ENCODE measurements at regions of chr5 and their contacts with region 1.

Region 1: GRCh38 chr5:31825518-31826068 is 186.7 kb downstream of the PDZD2 start:
- DNase-seq: peak; percentile 59
- H3K4me3 Mint-ChIP-seq: no peak overlapping the region
- H3K27ac Mint-ChIP-seq: no peak overlapping the region
- H3K4me1 Mint-ChIP-seq: no peaks in the 10 kb centered on the region
- H3K27me3 Mint-ChIP-seq: peaks cover 25% of the 10 kb centered on the region
- CTCF ChIP-seq: peak; percentile 17

Region 2: DNA sequence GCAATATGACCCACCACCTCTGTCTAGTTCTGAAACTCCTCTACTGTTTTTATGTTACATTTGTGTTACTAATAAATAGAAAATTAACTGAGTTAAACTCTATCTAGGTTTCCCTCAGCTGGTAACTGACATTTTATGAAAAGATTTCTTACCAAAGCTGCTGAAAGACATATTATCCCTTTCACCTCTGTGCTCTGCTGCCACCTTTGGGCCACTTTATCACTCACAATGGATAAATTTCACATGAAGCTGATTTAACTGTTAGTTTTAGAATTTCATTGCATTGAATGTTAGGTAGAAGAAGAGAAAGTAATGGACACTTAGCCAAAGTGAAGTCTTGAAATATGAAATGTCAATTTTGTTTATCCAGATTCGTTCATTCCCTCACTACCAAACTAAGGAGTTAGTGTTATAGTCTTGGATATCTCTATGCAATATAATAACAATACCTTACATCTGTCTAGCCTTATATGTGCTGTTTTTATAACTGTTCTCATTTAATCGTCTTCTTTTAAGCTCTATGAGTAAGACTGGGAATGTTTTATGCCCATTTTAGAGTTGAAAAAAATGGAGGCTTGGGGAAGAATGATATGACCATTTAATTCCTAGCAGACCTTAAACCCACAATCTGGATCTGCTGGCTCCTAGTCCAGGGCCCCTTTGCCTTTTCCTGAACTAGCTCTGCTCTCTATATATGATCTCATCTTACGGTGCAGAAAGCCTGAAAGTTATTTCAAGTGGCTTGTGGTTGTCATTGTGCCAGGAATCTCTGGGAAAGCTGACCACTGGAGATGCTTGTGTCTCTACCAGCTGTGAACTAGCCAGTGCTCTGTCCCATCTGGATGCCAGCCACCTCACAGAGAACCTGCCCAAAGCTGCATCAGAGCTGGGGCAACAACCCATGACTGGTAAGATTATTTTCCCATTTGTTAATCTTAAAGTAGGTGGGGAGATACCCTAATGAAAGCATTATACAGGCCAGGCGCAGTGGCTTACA is 251.4 kb after region 1 on chr5:
- CTCF ChIA-PET with region 1: interaction called, 24 read pairs
- intact Hi-C with region 1: loop called (anchors 1 kb)
- DNase-seq: peak; percentile 42
- H3K4me3 Mint-ChIP-seq: no peak overlapping the region
- H3K27ac Mint-ChIP-seq: no peak overlapping the region
- H3K4me1 Mint-ChIP-seq: no peaks in the 10 kb centered on the region
- H3K27me3 Mint-ChIP-seq: no peaks in the 10 kb centered on the region
- CTCF ChIP-seq: peak; percentile 52

Region 3: GRCh38 chr5:32092938-32093812 is 267.6 kb after region 1 on chr5:
- CTCF ChIA-PET with region 1: interaction called, 4 read pairs
- intact Hi-C with region 1: loop called (anchors 1 kb)
- DNase-seq: peak; percentile 60
- H3K4me3 Mint-ChIP-seq: no peak overlapping the region
- H3K27ac Mint-ChIP-seq: no peak overlapping the region
- H3K4me1 Mint-ChIP-seq: no peaks in the 10 kb centered on the region
- H3K27me3 Mint-ChIP-seq: no peaks in the 10 kb centered on the region
- CTCF ChIP-seq: peak; percentile 74

Region 4: DNA sequence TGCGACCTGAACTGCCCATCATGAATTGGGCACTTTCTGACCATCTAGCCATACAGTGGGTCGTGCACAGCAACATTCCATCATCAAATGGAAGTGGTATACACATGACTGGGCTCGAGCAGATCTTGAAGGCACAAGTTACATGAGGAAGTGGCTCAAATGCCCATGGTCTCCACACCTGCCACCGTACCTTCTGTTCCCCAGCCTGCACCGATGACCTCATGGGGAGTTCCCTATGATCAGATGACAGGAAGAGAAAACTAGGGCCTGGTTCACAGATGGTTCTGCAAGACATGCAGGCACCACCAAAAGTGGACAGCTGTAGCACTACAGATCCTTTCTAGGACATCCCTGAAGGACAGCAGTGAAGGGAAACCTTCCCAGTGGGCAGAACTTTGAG is 465.3 kb after region 1 on chr5:
- CTCF ChIA-PET with region 1: no interaction called
- intact Hi-C with region 1: no loop called
- DNase-seq: no peak
- H3K4me3 Mint-ChIP-seq: no peak overlapping the region
- H3K27ac Mint-ChIP-seq: no peak overlapping the region
- H3K4me1 Mint-ChIP-seq: peaks cover 40% of the 10 kb centered on the region
- H3K27me3 Mint-ChIP-seq: no peaks in the 10 kb centered on the region
- CTCF ChIP-seq: no peak

Region 5: DNA sequence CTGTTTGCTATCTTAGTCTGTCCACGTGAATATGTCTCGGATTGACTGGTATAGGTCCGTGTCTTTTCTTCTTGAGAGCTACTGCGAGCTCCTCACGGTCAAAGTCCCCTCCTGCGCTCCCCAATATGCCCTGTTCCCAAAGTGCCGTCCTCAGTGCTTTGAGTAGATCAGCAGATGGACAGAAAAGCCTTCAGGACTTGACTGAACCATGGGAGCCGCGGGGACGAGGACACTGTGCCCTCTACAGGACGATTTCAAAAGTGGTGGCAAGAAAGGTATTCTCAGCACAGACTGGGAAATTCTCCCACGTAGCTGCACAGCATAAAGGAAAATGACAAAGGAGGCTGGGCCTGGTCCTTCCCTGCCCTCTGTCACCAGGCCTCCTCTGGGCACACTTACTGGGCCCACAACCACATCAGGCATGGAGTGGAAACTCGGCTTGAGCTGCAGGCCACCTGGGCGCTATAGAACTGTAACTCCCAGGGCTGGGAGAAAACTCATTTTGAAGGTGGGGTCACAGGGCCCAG is 503.8 kb after region 1 on chr5:
- CTCF ChIA-PET with region 1: no interaction called
- intact Hi-C with region 1: loop called (anchors 1 kb)
- DNase-seq: peak; percentile 76
- H3K4me3 Mint-ChIP-seq: no peak overlapping the region
- H3K27ac Mint-ChIP-seq: peak overlapping the region; percentile 44
- H3K4me1 Mint-ChIP-seq: peaks cover 53% of the 10 kb centered on the region
- H3K27me3 Mint-ChIP-seq: no peaks in the 10 kb centered on the region
- CTCF ChIP-seq: peak; percentile 50

Region 6: DNA sequence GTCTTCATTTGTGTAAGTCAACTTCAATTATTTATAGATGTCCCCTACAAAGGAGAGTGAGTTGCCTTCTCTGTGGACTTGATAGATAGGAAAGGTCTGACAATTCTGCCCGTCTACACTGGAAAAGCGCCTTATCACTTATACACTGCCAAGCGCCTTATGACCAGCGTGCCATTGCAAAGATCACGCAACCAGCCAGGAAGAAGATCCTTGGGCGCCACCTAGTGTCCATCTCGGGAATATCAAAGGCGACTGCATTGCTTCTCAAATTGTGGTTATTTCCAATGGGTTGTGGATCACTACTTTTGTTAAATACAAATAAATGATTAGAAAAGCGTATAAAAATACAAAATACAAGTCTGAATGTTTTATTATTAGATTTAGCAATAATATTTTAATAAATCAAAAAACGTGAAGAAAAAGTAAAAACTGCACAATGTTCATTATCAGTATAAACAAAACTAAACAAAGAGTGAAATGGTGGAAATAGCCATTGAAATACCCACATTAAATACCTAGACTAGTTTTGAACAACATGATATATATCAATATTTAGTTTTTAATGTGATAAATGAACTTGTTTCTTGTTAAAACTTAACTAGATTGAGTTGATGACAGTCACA is 787.6 kb after region 1 on chr5:
- CTCF ChIA-PET with region 1: no interaction called
- intact Hi-C with region 1: loop called (anchors 5 kb)
- DNase-seq: peak; percentile 88
- H3K4me3 Mint-ChIP-seq: no peak overlapping the region
- H3K27ac Mint-ChIP-seq: no peak overlapping the region
- H3K4me1 Mint-ChIP-seq: peaks cover 11% of the 10 kb centered on the region
- H3K27me3 Mint-ChIP-seq: no peaks in the 10 kb centered on the region
- CTCF ChIP-seq: peak; percentile 81